GM10248 (cell line): ENCODE measurements at regions of chr3 and their contacts with region 1.

Region 1: DNA sequence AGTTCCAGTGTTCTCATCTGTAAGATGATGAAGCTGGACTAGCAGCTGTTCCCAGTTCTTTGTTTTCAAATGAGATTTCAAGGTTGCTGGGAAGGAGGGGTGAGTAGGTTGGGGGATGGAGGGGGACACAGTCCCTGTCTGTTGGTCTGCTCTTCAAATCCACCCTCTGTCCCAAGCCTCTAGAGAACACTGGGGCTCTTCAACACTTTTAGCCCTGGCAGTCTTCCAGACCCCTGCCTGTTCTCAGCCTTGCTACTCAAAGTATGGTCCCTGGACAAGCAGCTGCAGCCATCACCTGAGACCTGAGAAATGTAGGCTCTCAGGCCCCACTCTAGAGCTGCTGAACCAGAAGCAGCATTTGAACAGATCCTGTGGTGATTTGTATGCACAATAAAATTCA is 41.3 kb downstream of the NEK11 start:
- DNase-seq: no peak
- CTCF ChIP-seq: no peak

Region 2: GRCh38 chr3:131082871-131083863 is 15.2 kb after region 1 on chr3:
- CTCF ChIA-PET with region 1: interaction called, 10 read pairs
- POLR2A ChIA-PET with region 1: no interaction called
- DNase-seq: no peak
- CTCF ChIP-seq: no peak